ENCODE measurements at regions of chr19 and their contacts with region 1.

Region 1: GRCh38 chr19:49443366-49444099 is 2.2 kb upstream of the SLC17A7 start:
- DNase-seq: peak; percentile 94
- ATAC-seq: peak; percentile 85
- H3K4me3 Mint-ChIP-seq: peak overlapping the region; percentile 86
- H3K27ac Mint-ChIP-seq: peak overlapping the region; percentile 90
- H3K4me1 Mint-ChIP-seq: peaks cover 39% of the 10 kb centered on the region
- H3K27me3 Mint-ChIP-seq: peaks cover 34% of the 10 kb centered on the region
- CTCF ChIP-seq: peak; percentile 77

Region 2: DNA sequence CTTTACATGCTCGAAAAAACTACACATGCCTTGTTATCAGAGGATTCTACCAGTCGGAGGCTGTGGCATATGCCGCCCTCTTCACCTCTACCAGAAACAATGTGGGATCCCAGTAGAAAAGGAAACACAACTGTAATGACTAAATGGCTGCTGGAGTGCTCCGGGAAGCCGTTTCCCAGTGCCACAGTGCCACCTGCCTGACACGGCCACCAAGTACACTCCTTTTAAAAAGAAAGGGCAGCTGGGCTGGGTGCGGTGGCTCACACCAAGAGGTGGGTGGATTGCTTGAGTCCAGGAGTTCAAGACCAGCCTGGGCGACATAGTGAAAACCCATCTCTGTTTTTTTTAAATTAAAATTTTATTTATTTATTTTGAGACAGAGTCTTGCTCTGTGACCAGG is 218.7 kb before region 1 on chr19:
- CTCF ChIA-PET with region 1: interaction called, 4 read pairs
- POLR2A ChIA-PET with region 1: no interaction called
- intact Hi-C with region 1: loop called (anchors 1 kb)
- DNase-seq: no peak
- ATAC-seq: peak; percentile 54
- H3K4me3 Mint-ChIP-seq: no peak overlapping the region
- H3K27ac Mint-ChIP-seq: no peak overlapping the region
- H3K4me1 Mint-ChIP-seq: peaks cover 6% of the 10 kb centered on the region
- H3K27me3 Mint-ChIP-seq: peaks cover 6% of the 10 kb centered on the region
- CTCF ChIP-seq: no peak

Region 3: GRCh38 chr19:49340069-49340864 is 103.3 kb before region 1 on chr19:
- CTCF ChIA-PET with region 1: no interaction called
- POLR2A ChIA-PET with region 1: interaction called, 28 read pairs
- intact Hi-C with region 1: loop called (anchors 1 kb)
- DNase-seq: peak; percentile 93
- ATAC-seq: peak; percentile 72
- H3K4me3 Mint-ChIP-seq: peak overlapping the region; percentile 80
- H3K27ac Mint-ChIP-seq: peak overlapping the region; percentile 93
- H3K4me1 Mint-ChIP-seq: peaks cover 83% of the 10 kb centered on the region
- H3K27me3 Mint-ChIP-seq: no peaks in the 10 kb centered on the region
- CTCF ChIP-seq: no peak

Region 4: DNA sequence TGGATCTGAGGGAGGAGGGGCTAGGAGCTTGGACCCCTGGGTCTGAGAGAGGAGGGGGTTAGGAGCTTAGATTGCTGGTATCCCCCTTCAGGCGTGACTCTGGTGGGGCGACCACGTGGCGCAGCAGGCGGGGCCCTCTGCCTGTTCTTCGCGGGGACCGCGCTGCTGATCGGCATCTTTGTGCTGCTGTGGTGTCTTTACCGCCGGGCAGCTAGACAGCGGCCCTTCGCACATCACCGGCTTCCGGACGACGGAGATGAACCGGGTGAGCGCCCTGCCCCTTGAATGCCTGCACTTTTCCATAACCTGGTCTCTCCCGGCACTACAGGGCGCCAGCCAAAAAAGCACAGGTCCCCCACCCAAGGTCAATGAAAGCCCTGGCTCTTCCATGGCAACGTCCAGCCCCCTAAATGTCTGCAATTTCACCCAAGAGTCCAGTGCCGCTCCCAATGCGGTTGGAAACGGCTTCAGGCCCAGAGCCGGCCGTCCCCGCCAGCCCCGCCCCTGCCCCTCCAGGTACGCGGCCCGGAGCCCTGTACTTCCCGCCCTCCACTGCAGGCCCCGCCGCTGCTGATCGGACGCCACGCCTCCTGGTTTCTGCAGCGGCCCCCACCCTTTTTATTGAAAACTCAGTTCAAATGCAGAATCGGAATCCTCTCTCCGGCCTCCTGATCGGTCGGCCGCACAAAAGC is 15.5 kb before region 1 on chr19:
- CTCF ChIA-PET with region 1: no interaction called
- POLR2A ChIA-PET with region 1: interaction called, 3 read pairs
- intact Hi-C with region 1: loop called (anchors 2 kb)
- DNase-seq: no peak
- ATAC-seq: peak; percentile 61
- H3K4me3 Mint-ChIP-seq: peak overlapping the region; percentile 70
- H3K27ac Mint-ChIP-seq: no peak overlapping the region
- H3K4me1 Mint-ChIP-seq: peaks cover 51% of the 10 kb centered on the region
- H3K27me3 Mint-ChIP-seq: peaks cover 73% of the 10 kb centered on the region
- CTCF ChIP-seq: no peak

Region 5: DNA sequence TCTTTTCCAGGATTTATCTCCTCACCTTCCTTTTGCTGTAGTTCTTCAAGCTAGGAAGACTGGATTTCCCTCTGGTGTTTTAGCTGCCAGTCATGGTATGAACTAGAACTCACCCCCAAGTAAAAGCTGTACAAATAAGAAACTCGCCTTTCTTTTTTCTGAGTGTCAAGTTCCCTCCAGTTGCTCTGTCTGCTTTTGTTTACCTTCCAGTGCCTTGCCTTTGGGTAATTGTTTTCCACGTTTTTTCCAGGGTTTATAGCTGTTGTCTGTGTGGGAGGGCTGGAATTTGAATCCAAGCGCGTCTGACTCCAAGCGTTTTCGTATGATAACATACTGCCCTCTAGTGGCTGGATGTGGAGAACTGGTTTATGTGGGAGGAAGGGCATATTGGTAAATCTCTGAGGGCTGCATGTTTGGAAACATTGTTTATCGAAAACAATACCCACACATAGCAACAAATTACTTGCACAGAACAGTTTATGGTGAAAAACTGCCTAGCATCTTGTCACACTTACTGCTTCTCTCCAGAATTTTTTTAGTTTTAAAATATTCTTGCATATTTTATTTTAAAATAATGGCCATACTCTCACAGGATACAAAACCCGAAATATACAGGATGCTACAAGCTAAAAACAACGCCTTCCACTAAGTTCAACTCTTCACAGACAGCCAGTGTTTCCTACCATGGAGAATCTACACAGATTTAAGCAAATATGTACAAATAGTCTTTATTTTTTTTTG is 103.5 kb after region 1 on chr19:
- CTCF ChIA-PET with region 1: no interaction called
- POLR2A ChIA-PET with region 1: no interaction called
- intact Hi-C with region 1: loop called (anchors 1 kb)
- DNase-seq: no peak
- ATAC-seq: peak; percentile 76
- H3K4me3 Mint-ChIP-seq: peak overlapping the region; percentile 47
- H3K27ac Mint-ChIP-seq: no peak overlapping the region
- H3K4me1 Mint-ChIP-seq: peaks cover 8% of the 10 kb centered on the region
- H3K27me3 Mint-ChIP-seq: no peaks in the 10 kb centered on the region
- CTCF ChIP-seq: peak; percentile 52